ENCODE measurements at regions of chr13 and their contacts with region 1.

Region 1: GRCh38 chr13:33218001-33218400 is 67.6 kb downstream of the STARD13 start:
- DNase-seq: peak; percentile 88 to 93
- H3K4me3 ChIP-seq: peak overlapping the region; percentile 11; the same call in 1 of the 2 replicates
- H3K4me3 Mint-ChIP-seq: peak overlapping the region; percentile 59
- H3K27ac Mint-ChIP-seq: peak overlapping the region; percentile 91
- H3K4me1 ChIP-seq: peaks cover 57% of the 10 kb centered on the region
- H3K4me1 Mint-ChIP-seq: peaks cover 53% of the 10 kb centered on the region
- H3K27me3 ChIP-seq: no peaks in the 10 kb centered on the region
- H3K27me3 Mint-ChIP-seq: no peaks in the 10 kb centered on the region
- CTCF ChIP-seq: no peak

Region 2: DNA sequence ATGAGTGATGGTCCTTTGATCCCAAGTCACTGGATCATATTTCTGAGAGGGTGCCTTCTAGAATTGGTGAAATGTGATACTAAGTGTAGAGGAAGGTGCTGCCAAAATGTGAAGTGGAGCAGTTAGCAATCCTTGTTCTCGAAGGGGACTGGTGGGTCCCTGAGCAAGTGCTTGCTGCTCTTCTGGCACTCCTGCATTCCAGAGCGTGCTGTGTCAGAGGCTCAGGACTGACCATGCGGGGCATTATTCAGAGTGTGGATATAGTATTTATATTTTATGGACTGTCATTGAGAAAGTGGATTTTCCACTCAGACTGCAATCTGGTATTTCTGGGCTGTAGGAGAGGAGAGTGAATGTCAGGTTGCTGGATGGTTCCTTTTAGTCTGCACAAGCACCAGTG is 354.4 kb before region 1 on chr13:
- CTCF ChIA-PET with region 1: no interaction called
- POLR2A ChIA-PET with region 1: no interaction called
- intact Hi-C with region 1: no loop called
- DNase-seq: no peak
- H3K4me3 ChIP-seq: no peak overlapping the region
- H3K4me3 Mint-ChIP-seq: no peak overlapping the region
- H3K27ac Mint-ChIP-seq: no peak overlapping the region
- H3K4me1 ChIP-seq: no peaks in the 10 kb centered on the region
- H3K4me1 Mint-ChIP-seq: no peaks in the 10 kb centered on the region
- H3K27me3 ChIP-seq: no peaks in the 10 kb centered on the region
- H3K27me3 Mint-ChIP-seq: no peaks in the 10 kb centered on the region
- CTCF ChIP-seq: no peak

Region 3: GRCh38 chr13:33017323-33017929 is 200.6 kb before region 1 on chr13:
- CTCF ChIA-PET with region 1: no interaction called
- POLR2A ChIA-PET with region 1: no interaction called
- intact Hi-C with region 1: loop called (anchors 10 kb)
- DNase-seq: peak; percentile 56 to 66
- H3K4me3 ChIP-seq: peak overlapping the region; percentile 59
- H3K4me3 Mint-ChIP-seq: peak overlapping the region; percentile 73
- H3K27ac Mint-ChIP-seq: no peak overlapping the region
- H3K4me1 ChIP-seq: no peaks in the 10 kb centered on the region; the same call in 1 of the 2 replicates
- H3K4me1 Mint-ChIP-seq: no peaks in the 10 kb centered on the region
- H3K27me3 ChIP-seq: peaks cover 2% of the 10 kb centered on the region; the same call in 1 of the 2 replicates
- H3K27me3 Mint-ChIP-seq: peaks cover 8% of the 10 kb centered on the region
- CTCF ChIP-seq: peak in 1 of 2 experiments; percentile 63

Region 4: DNA sequence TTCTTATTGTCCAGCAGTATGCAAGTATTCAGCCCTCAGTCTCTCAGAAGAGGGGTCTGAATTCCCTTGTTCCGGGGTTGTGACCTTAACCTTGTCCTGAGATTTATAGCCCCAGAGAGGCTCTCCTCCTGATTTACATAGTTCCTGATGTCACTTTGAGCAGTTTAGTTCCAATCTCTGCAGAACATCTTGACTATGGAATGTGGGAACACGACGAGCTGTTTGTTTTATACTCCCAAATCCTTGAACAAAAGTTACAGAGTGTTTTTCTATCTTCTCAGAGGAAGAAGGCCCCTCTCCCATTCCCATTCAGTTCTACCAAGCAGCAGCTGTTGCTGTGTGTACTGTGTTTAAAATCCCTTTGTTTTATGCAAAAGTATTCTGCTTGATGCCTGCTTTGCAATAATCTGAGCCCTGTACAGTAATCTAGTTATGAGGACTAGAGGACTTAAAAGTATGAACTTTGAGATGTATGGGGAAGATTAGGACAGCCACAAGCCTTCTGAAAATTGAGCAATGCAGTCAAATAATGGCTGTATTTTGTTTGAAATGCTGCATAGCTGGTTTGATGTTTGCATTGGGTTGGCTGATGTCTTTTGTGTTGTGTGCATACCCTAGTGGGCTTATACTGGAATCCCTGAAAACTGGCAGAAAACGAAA is 127.1 kb before region 1 on chr13:
- CTCF ChIA-PET with region 1: interaction called, 3 read pairs
- POLR2A ChIA-PET with region 1: no interaction called
- intact Hi-C with region 1: loop called (anchors 10 kb)
- DNase-seq: peak; percentile 51 to 69
- H3K4me3 ChIP-seq: no peak overlapping the region
- H3K4me3 Mint-ChIP-seq: peak overlapping the region; percentile 50
- H3K27ac Mint-ChIP-seq: peak overlapping the region; percentile 86
- H3K4me1 ChIP-seq: peaks cover 34% of the 10 kb centered on the region
- H3K4me1 Mint-ChIP-seq: peaks cover 34% of the 10 kb centered on the region
- H3K27me3 ChIP-seq: no peaks in the 10 kb centered on the region
- H3K27me3 Mint-ChIP-seq: no peaks in the 10 kb centered on the region
- CTCF ChIP-seq: peak in 1 of 2 experiments; percentile 26

Region 5: DNA sequence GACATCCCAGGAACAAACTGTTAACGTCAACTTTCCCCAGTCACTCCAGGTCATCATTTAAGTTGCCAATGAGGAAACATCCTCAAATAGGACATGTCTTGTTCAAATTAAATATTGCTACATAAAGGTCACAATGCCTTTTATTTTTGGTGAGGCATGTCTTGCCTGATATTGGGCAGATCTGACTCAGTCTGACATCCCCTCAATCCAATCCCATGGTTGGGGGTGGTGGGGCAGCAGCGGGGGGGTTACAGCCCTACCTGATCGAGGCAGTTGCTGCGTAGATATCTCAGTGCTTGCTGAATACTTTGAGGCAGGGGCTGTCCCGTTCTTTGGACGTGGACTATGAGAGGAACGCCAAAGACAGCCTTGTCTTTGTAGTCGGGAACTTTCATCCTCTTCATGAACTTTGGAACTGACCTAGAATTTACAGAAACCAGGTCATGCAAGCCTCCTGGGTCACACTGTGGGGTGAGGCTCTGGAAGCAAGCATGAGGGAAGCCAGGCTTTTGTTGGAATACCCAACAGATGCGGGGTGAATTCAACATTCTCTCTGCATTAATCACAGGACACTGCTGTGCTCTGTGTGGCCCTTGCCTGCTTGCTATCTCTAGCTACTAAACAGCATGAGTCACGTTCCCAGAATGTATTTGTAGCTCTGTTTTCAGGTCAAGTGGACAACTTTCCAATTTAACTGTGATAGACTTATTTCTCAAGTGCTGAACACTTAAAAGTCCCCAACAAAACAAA is 92.0 kb before region 1 on chr13:
- CTCF ChIA-PET with region 1: no interaction called
- POLR2A ChIA-PET with region 1: interaction called, 4 read pairs
- intact Hi-C with region 1: loop called (anchors 1 kb)
- DNase-seq: peak; percentile 85 to 91
- H3K4me3 ChIP-seq: no peak overlapping the region
- H3K4me3 Mint-ChIP-seq: peak overlapping the region; percentile 54
- H3K27ac Mint-ChIP-seq: peak overlapping the region; percentile 88
- H3K4me1 ChIP-seq: peaks cover 41% of the 10 kb centered on the region
- H3K4me1 Mint-ChIP-seq: peaks cover 37% of the 10 kb centered on the region
- H3K27me3 ChIP-seq: no peaks in the 10 kb centered on the region
- H3K27me3 Mint-ChIP-seq: no peaks in the 10 kb centered on the region
- CTCF ChIP-seq: no peak

Region 6: DNA sequence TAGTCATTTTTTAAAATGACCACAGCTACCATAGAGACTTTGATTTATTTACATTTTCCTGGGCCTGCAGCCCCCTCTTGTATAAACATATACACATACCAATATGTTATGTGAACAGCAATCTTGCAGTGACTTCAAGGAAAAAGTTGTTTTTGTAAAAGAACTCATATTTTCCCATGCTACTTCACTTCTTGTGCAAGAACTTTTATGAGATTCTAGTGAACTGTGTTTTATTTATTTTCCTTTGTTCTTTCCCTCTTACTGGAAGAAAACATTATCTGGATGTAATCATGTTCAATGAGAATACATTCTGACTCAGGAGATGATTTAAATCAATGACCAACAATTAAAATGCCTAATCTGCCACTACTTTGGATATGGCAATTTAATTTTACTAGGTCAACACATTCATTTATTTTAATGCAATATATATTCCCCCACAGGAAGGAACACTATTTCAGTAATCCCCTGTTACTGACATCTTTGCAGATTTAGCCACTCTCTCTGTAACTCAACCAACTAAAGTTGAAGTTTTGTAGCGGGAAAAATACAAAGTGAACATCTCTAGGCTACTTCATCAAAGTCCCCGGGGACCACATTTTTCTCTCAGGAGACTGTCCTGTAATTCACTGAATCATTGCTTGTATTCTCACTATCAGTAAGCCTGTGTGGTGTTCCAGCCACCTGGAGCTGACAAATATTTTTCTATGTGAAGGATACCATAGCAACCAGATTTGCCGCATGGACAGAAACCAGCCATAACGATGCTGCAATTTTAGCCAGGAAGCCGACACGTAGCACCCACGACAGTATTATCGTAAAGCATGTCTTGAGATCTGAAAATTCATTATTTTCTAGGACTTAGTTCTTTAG is 22.9 kb before region 1 on chr13:
- CTCF ChIA-PET with region 1: no interaction called
- POLR2A ChIA-PET with region 1: no interaction called
- intact Hi-C with region 1: loop called (anchors 2 kb)
- DNase-seq: peak in 1 of 2 experiments; percentile 36
- H3K4me3 ChIP-seq: no peak overlapping the region
- H3K4me3 Mint-ChIP-seq: no peak overlapping the region
- H3K27ac Mint-ChIP-seq: peak overlapping the region; percentile 21
- H3K4me1 ChIP-seq: peaks cover 9% of the 10 kb centered on the region
- H3K4me1 Mint-ChIP-seq: peaks cover 18% of the 10 kb centered on the region
- H3K27me3 ChIP-seq: no peaks in the 10 kb centered on the region
- H3K27me3 Mint-ChIP-seq: no peaks in the 10 kb centered on the region
- CTCF ChIP-seq: no peak

Region 7: DNA sequence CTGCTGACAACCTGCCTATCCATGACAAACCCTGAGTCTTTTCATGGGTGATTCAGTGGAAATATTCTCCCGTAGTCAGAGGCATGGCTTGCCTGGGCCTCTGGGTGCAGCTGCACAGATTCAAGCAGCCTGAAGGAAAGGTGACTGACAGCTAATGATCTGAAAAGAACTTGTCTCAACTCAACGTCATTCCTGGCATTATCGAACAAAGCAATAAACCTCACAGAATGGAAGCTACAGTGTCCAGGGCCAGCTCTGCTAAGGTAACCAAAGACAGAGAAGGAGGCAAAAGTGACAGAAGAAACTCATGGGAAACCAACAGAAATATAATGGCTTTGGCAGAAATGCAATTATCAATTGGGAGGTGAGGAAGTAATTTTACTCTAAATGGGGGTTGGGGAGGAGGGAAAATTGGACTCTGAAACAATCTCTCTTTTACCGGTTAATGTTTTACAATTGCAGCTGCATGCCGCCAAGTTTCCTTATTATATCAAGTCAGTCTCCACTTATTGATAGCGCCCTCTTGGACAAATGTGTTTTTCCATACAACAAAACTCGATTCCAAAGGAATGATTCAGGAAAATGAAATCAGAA is 54.6 kb after region 1 on chr13:
- CTCF ChIA-PET with region 1: no interaction called
- POLR2A ChIA-PET with region 1: interaction called, 17 read pairs
- intact Hi-C with region 1: no loop called
- DNase-seq: peak; percentile 57 to 62
- H3K4me3 ChIP-seq: peak overlapping the region; percentile 16
- H3K4me3 Mint-ChIP-seq: peak overlapping the region; percentile 69
- H3K27ac Mint-ChIP-seq: peak overlapping the region; percentile 78
- H3K4me1 ChIP-seq: peaks cover 38% of the 10 kb centered on the region
- H3K4me1 Mint-ChIP-seq: peaks cover 28% of the 10 kb centered on the region
- H3K27me3 ChIP-seq: no peaks in the 10 kb centered on the region
- H3K27me3 Mint-ChIP-seq: no peaks in the 10 kb centered on the region
- CTCF ChIP-seq: peak in 1 of 2 experiments; percentile 32

Region 8: GRCh38 chr13:33642374-33643068 is 424.5 kb after region 1 on chr13:
- CTCF ChIA-PET with region 1: no interaction called
- POLR2A ChIA-PET with region 1: no interaction called
- intact Hi-C with region 1: loop called (anchors 2 kb)
- DNase-seq: peak; percentile 83 to 86
- H3K4me3 ChIP-seq: no peak overlapping the region
- H3K4me3 Mint-ChIP-seq: peak overlapping the region; percentile 22
- H3K27ac Mint-ChIP-seq: peak overlapping the region; percentile 89
- H3K4me1 ChIP-seq: peaks cover 54% of the 10 kb centered on the region
- H3K4me1 Mint-ChIP-seq: peaks cover 60% of the 10 kb centered on the region
- H3K27me3 ChIP-seq: no peaks in the 10 kb centered on the region
- H3K27me3 Mint-ChIP-seq: no peaks in the 10 kb centered on the region
- CTCF ChIP-seq: no peak